Mammary epithelial cell (primary cell): ENCODE measurements at regions of chr4 and their contacts with region 1.

Region 1: DNA sequence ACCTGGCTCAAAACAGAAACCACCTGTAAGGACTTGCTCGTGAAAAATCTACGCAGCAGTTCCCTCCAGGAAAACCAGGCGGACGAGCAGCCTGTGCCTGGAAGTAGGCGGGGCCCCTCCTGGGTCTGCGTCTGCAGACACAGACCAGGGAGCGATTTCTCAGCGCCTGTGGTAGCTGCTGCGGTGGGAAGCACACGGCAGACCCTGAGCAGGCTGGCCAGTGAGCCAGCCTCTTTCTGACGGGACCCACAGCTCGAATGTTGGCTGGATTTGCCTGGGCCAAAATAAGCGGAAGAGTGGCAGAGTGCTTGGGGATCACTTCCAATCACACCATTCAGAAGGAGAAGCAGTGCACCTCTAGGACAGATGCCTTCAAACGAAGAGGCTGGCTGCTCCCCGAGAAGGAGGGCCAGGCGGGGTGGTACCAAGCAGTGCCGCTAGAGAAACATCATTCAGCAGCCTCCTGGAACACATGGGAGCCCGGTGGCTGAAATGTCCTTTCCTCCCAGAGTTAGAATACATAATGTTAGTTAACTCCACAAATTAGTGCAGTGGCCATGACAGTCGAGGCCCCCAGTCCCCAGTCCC is 85.9 kb downstream of the GATB start:
- DNase-seq: peak; percentile 69
- H3K4me3 ChIP-seq: peak overlapping the region; percentile 22 to 30 (median 30)
- H3K27ac ChIP-seq: peak overlapping the region; percentile 28
- H3K4me1 ChIP-seq: peaks cover 32% of the 10 kb centered on the region
- H3K27me3 ChIP-seq: no peaks in the 10 kb centered on the region
- CTCF ChIP-seq: peak in 1 of 2 donors; percentile 38

Region 2: DNA sequence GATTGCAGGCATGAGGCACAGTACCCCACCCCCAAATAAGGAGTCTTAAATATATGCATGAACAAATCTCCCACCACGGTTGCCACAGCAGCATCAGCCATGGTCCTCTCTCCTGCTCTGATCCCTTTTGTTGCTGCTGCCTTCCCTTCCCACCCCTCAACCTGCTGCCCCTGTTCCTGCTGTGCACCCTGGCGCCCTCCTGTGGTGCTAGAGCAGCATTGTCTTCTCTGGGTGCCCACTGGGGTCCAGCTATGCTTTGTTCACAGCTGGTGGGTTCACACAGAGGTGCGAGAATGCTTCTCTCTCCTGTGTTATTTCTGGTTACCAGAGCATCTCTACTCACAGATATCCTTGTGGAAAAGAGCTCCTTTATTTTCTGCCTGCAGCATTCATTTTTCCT is 30.3 kb before region 1 on chr4:
- CTCF ChIA-PET with region 1: no interaction called
- dilution Hi-C with region 1: no loop called
- in situ Hi-C with region 1: no loop called
- intact Hi-C with region 1: no loop called
- DNase-seq: no peak
- H3K4me3 ChIP-seq: no peak overlapping the region
- H3K27ac ChIP-seq: no peak overlapping the region
- H3K4me1 ChIP-seq: peaks cover 7% of the 10 kb centered on the region
- H3K27me3 ChIP-seq: no peaks in the 10 kb centered on the region
- CTCF ChIP-seq: peak; percentile 45 to 47

Region 3: GRCh38 chr4:151744614-151745013 is 69.7 kb after region 1 on chr4:
- CTCF ChIA-PET with region 1: no interaction called
- dilution Hi-C with region 1: no loop called
- in situ Hi-C with region 1: no loop called
- intact Hi-C with region 1: loop called (anchors 5 kb)
- DNase-seq: peak; percentile 95
- H3K4me3 ChIP-seq: no peak overlapping the region
- H3K27ac ChIP-seq: peak overlapping the region; percentile 85
- H3K4me1 ChIP-seq: peaks cover 41% of the 10 kb centered on the region
- H3K27me3 ChIP-seq: no peaks in the 10 kb centered on the region
- CTCF ChIP-seq: no peak

Region 4: DNA sequence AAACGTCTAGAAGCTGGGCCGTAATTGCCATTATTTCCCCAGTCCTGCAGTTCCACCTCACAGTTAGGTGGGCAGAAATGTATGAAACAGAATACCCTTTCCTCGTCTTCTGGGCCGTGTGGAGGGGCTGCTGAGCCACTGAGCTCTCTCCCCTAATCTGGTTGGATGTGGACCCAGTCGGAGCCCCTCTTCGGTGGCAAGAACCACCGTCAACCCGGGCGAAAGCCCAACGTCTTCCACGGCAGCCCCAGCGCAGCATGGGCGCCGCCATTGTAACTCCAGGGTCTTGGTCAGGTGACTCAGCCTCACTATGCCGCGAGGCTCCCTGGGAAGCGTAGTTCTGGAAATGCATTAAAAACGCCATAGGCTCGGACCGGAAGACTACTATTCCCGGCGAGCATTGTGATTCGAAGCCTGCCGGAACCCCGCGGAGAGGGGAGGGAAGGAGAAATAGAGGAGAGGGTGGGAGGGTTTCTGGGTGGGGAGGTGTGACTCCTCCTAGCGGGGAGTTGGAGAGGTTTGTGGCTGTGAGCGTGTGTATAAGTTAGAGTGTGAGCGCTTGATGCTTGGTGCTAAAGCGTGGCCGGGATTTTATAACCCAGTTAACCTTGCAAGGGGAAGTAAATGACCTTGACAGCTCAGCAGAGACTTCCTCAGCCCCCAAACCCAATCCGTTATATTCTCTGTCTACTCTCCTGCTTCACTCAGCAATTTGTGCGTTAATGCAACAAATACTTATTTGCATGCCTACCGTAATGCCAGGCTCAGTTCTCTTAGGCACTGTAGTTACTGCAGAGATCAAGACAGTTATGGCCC is 86.0 kb after region 1 on chr4 and contains the start of gene GATB:
- CTCF ChIA-PET with region 1: no interaction called
- dilution Hi-C with region 1: no loop called
- in situ Hi-C with region 1: no loop called
- intact Hi-C with region 1: loop called (anchors 5 kb)
- DNase-seq: peak; percentile 94
- H3K4me3 ChIP-seq: peak within 1 kb of the TSS; percentile 65 to 82 (median 80)
- H3K27ac ChIP-seq: peak within 1 kb of the TSS; percentile 85
- H3K4me1 ChIP-seq: peaks cover 9% of the 10 kb centered on the region
- H3K27me3 ChIP-seq: no peaks in the 10 kb centered on the region
- CTCF ChIP-seq: peak; percentile 27 to 49
- total RNA-seq, gene GATB: 15.2 to 21.2 TPM

Region 5: DNA sequence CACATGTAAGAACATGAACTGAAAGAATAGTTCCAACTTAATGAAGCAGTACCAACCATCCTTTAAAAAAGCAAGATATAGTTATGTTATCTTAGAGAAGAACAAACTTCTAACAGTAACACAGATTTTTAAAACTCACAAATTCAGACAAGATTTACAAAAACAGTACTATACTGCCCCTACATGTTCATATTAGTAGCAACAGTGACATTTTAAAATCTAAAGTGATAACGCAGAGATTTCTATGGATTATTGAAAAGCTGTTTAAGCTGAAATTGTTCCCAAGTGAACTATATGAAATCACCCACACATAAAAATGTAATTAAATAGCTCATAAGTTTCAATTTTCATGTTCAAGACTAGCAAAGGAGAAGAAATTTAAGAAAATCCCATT is 695.0 kb after region 1 on chr4:
- CTCF ChIA-PET with region 1: no interaction called
- dilution Hi-C with region 1: no loop called
- in situ Hi-C with region 1: no loop called
- intact Hi-C with region 1: loop called (anchors 10 kb)
- DNase-seq: no peak
- H3K4me3 ChIP-seq: no peak overlapping the region
- H3K27ac ChIP-seq: no peak overlapping the region
- H3K4me1 ChIP-seq: no peaks in the 10 kb centered on the region
- H3K27me3 ChIP-seq: no peaks in the 10 kb centered on the region
- CTCF ChIP-seq: peak; percentile 43 to 45